Dorsolateral prefrontal cortex (tissue), 120 donors: ENCODE measurements at regions of chr13 and their contacts with region 1.

Region 1: GRCh38 chr13:96020155-96020575 is 33.0 kb downstream of the UGGT2 start:
- DNase-seq: peak in 2 of 10 donors; percentile 35 to 61
- H3K4me3 ChIP-seq: no peak overlapping the region
- H3K27ac ChIP-seq: peak overlapping the region in 7 of 59 donors; percentile 6 to 32 (median 21)
- H3K27me3 ChIP-seq: no peaks in the 10 kb centered on the region
- CTCF ChIP-seq: peak in 55 of 56 donors; percentile 39 to 86 (median 70)

Region 2: DNA sequence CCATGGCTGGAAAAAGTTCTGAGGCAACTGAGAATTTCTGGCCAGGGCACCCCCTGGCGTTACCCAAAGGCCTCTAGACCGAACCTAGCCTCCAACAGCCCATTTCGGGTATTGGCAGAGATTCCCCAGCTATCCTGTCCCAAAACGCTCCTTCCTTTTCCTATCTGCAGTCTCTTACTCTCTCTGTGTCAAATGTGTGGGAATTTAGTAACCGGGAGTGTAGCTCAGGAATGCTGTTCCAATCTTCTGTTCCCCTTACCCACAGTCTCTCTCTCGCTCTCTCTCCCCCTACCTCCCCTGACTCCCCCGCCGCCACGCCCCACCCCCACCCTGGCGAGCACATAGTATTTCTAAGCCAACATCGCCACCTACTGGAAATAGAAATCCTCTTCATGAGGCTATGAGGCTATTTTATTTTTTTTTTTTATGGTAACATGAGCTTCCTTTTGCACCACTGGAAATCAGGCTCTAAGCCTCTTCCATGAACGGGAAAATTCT is 947.1 kb after region 1 on chr13:
- intact Hi-C with region 1: loop called in 1 of 2 experiments (anchors 10 kb)
- DNase-seq: no peak
- H3K4me3 ChIP-seq: no peak overlapping the region
- H3K27ac ChIP-seq: no peak overlapping the region
- H3K27me3 ChIP-seq: no peaks in the 10 kb centered on the region
- CTCF ChIP-seq: peak in 12 of 56 donors; percentile 6 to 24 (median 13)